ENCODE measurements at regions of chr6 and their contacts with region 1.

Region 1: DNA sequence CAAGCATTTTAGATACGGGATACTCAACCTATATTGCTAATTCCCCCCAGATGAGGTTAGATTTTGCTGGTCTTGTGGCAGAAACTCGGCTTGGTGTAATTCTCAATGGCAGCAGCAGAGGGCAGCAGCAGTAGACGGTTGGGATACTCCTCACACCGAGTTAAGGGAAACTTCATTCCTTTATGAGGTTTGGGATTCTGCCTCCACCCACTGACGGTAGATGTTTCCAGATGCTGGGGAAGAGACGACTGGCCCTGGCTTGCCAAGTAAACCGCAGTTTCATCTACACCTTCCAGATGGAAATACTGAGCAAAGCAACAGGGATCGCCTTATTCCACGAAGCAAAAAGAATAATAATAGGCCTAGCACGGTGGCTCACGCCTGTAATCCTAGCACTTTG is 8.2 kb upstream of the TBC1D7 start:
- DNase-seq: peak; percentile 82
- H3K4me3 Mint-ChIP-seq: no peak overlapping the region
- H3K27ac Mint-ChIP-seq: no peak overlapping the region
- H3K4me1 Mint-ChIP-seq: peaks cover 8% of the 10 kb centered on the region
- H3K27me3 Mint-ChIP-seq: no peaks in the 10 kb centered on the region

Region 2: GRCh38 chr6:12666886-12667285 is 669.7 kb before region 1 on chr6:
- CTCF ChIA-PET with region 1: no interaction called
- intact Hi-C with region 1: no loop called
- DNase-seq: no peak
- H3K4me3 Mint-ChIP-seq: no peak overlapping the region
- H3K27ac Mint-ChIP-seq: no peak overlapping the region
- H3K4me1 Mint-ChIP-seq: no peaks in the 10 kb centered on the region
- H3K27me3 Mint-ChIP-seq: no peaks in the 10 kb centered on the region

Region 3: DNA sequence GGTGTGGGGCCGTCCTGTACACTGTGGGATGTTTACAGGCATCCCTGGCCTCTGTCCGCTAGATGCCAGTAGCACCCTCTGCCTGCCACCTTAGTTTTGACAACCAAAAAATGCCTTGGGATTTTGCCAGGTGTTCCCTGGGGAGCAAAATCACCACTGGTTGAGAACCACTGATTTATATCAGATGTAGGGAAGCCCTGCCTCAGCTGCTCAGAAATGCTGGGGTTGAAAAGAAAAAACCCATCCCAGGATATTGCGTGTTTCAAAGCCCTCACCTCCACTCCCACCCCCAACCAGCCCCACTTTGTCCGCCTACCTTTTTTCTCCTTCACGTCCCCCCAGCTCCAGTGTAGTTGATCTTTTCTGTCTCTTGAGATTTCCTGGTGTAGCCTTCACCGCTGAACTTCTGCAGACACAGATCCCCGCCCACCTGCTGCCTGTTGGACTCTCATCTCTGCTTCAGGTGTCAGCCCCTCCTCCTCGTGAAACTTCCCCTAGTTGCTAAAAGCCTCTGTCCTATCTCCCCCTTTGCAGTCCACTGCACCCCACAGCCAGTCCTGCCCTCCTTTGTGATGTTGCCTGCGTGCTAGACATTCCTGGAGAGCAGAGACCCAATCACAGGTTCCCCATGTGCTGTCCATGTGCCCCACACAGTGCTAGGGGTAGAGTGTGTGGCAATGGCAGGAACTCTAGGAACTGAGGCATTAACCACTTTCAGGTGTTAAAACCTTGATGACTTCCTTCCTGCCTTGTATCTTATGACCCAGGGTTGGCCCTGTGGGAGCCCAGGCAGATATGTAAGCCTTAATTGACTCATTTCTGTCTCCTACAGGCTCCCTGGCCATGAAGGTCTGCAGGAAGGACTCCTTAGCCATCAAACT is 107.1 kb before region 1 on chr6:
- CTCF ChIA-PET with region 1: no interaction called
- intact Hi-C with region 1: no loop called
- DNase-seq: peak; percentile 31
- H3K4me3 Mint-ChIP-seq: no peak overlapping the region
- H3K27ac Mint-ChIP-seq: no peak overlapping the region
- H3K4me1 Mint-ChIP-seq: peaks cover 10% of the 10 kb centered on the region
- H3K27me3 Mint-ChIP-seq: peaks cover 2% of the 10 kb centered on the region

Region 4: DNA sequence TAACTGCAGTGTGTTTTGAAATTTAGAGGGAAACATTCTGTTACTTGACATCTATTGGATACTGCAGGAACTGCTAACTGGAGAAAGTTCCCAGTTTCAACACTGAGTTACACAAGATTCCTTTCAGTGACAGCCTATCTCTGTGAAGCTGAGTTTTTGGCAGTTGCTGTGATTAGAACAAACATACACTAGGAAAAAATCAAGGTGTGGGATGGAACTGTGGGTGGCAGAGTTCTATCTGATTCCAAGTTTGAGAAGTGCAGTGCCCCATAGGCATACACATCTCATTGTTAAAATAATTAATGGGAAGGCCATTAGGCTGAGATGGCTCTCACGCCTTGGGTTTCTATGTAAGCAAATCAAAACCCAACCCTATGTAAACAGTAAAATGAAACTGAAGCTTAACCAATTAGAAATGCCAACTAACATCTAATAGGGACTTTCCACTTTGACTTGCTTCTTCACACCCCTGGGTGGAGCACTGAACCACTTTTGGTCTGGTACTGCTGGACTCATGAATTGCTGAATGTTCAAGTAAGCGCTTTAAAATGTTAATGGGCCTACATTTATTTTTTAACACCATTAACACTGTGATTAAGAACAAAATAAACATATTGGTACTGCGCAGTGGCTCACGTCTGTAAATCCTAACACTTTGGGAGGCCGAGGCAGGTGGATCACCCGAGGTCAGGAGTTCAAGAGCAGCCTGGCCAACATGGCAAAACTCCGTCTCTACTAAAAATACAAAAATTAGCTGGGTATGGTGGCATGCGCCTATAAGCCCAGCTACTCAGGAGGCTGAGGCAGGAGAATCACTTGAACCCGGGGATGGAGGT is 47.0 kb after region 1 on chr6:
- CTCF ChIA-PET with region 1: no interaction called
- intact Hi-C with region 1: loop called (anchors 1 kb)
- DNase-seq: peak; percentile 46
- H3K4me3 Mint-ChIP-seq: no peak overlapping the region
- H3K27ac Mint-ChIP-seq: no peak overlapping the region
- H3K4me1 Mint-ChIP-seq: peaks cover 13% of the 10 kb centered on the region
- H3K27me3 Mint-ChIP-seq: no peaks in the 10 kb centered on the region

Region 5: DNA sequence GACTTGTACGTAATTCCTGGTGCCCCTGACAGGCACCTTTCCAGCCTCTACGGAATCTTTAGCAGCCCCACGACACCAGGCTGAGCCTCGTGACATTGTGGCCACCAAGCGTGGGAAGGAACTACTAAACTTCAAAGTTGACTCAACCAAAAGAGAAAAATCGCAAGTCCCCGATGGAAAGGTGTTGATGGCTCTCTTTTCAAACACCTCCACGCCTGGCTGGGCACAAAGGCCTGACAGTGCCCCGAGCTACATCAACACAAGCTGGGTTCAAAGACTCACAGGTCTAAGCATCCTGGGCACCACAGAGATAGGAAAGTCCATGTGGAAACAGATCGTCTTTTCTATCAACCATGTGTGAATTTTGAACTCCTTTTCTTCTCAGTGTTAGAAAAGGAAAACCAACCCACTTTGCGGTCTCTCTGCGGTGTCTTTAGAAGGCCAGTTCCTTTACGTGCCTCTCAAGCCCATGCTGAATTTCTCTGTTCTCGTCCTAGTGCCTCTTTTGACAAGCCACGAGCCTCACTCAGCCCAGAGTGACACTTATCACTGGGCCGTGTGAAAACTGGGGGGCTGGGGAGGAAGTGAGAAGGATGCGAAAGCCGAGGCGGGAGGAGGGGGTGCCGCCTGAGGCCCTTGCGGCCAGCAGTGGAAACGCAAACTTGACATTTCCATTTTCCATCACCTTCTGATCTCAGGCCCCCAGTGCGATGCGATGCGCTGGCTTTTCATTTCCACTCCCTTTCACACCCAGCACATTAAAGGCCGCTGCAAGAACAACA is 91.4 kb after region 1 on chr6:
- CTCF ChIA-PET with region 1: interaction called, 6 read pairs
- intact Hi-C with region 1: loop called (anchors 1 kb)
- DNase-seq: peak; percentile 90
- H3K4me3 Mint-ChIP-seq: peak overlapping the region; percentile 53
- H3K27ac Mint-ChIP-seq: peak overlapping the region; percentile 85
- H3K4me1 Mint-ChIP-seq: peaks cover 68% of the 10 kb centered on the region
- H3K27me3 Mint-ChIP-seq: no peaks in the 10 kb centered on the region

Region 6: DNA sequence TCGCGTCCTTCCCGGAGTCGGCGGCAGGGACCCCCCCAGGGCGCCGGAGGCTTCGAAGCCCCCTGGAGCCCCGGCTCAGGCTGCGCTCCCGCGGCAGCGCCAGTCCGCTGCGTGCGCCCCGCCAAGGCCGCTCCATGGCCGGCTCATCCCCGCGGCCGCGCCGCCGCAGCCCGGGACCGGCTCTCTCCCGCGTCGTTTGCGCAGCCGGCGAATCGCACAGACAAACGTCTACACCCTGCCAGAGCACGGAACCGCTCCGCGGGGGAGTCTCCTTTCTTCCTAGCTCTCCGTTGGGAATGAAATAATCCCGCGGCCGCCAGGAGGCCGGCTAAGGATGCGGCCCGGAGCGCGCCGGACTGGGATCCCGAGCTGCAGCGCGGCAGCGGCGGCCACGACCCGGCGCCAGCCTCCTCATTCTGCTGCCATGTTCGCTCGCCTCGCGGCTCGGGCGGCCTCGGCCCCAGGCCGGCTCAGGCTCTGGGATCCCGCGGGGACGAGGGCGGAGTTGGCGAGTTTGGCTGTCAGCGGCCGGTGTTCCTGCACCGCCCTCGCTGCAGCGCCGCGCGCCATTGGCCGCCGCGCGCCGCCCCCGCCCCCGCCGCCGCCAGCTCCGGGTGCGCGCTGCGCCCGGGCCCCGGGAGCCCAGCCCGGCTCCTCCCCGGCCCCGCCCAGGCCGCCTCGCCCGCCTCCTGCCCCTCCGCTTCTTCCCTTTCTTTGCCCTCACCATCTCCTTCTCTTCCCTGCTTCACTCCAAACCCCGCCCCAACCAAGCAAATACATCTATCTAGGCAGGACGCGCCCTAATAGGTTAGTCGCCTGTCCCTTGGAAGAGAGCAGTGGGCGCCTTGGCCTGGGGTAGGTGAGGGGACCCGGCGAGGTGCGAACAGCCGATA is 150.8 kb after region 1 on chr6 and contains the start of gene GFOD1:
- CTCF ChIA-PET with region 1: interaction called, 5 read pairs
- intact Hi-C with region 1: loop called (anchors 2 kb)
- DNase-seq: peak; percentile 80
- H3K4me3 Mint-ChIP-seq: peak within 1 kb of the TSS; percentile 92
- H3K27ac Mint-ChIP-seq: peak within 1 kb of the TSS; percentile 47
- H3K4me1 Mint-ChIP-seq: peaks cover 24% of the 10 kb centered on the region
- H3K27me3 Mint-ChIP-seq: peaks cover 2% of the 10 kb centered on the region
- total RNA-seq, gene GFOD1: 3.7 to 4.2 TPM

Region 7: DNA sequence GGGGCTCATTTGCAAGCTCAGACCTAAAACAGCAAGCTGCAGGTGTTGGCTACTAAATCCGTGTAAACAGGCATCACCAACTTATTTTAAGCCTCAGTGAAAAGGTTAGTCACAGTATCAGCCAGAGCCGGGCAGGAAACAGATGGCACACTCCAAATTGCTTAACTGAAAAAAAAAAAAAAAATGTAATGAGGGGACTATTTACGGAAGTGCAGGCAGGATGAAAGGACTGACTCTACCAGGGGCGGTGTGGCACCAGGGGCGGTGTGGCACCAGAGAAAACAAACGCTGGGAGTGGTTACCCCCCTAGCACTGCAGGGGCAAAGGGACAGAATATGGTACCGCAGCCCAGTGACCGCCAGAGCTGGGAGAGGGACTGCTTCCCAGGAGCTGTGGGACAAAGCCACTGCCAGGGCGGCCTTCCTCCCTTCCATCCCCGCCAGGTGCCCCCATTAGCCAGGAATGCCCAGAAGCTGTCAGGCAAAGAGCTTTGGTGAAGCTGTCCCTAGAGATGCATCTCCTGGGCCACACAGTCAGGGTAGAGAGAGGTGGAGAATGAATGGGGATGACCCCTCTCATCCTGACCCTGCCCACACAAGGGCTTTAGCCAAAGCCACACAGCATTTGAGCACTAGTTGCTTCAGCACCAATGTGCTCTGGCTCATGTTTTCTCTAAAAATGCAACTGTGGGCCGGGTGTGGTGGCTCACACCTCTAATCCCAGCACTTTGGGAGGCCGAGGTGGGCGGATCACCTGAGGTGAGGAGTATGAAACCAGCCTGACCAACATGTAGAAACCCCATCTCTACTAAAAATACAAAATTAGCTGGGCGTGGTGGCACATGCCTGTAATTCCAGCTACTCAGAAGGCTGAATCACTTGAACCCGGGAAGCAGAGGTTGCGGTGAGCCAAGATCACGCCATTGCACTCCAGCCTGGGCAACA is 190.4 kb after region 1 on chr6:
- CTCF ChIA-PET with region 1: interaction called, 4 read pairs
- intact Hi-C with region 1: loop called (anchors 1 kb)
- DNase-seq: peak; percentile 60
- H3K4me3 Mint-ChIP-seq: no peak overlapping the region
- H3K27ac Mint-ChIP-seq: no peak overlapping the region
- H3K4me1 Mint-ChIP-seq: peaks cover 11% of the 10 kb centered on the region
- H3K27me3 Mint-ChIP-seq: no peaks in the 10 kb centered on the region

Region 8: GRCh38 chr6:13538084-13538483 is 201.5 kb after region 1 on chr6:
- CTCF ChIA-PET with region 1: interaction called, 6 read pairs
- intact Hi-C with region 1: loop called (anchors 1 kb)
- DNase-seq: no peak
- H3K4me3 Mint-ChIP-seq: no peak overlapping the region
- H3K27ac Mint-ChIP-seq: no peak overlapping the region
- H3K4me1 Mint-ChIP-seq: no peaks in the 10 kb centered on the region
- H3K27me3 Mint-ChIP-seq: no peaks in the 10 kb centered on the region

Region 9: DNA sequence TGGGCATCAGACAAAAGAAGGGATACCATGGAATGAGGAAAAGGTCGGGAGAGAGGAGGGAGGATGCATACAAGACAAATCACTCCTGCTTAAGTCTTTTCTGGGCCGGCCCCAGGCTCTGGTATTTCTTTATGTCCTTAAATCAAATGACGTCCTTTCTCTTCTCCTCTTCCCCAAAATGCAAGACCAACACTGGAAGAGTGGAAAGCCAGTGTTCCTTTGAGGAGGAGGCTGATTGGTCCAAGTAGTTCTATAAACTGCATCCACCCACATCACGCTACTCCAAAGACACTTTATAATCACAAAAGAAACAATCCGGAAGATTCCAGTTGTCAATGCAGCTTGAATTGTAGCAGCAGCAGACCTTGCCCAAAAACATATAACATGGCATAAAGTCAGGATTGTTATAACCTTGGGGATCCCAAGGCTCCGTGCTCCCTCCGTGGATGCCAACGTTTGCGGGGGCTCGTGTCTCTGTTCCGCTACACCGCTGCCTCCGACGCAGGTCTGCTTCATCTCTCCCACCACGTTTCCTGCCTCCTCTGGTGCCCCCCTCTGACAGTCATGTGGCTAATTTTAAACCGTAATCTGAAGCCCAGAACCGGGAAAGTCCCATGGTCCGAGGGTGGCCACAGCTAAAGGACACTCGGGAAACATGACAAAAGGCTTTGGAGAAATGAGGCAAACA is 430.7 kb after region 1 on chr6:
- CTCF ChIA-PET with region 1: no interaction called
- intact Hi-C with region 1: loop called (anchors 1 kb)
- DNase-seq: peak; percentile 71
- H3K4me3 Mint-ChIP-seq: peak overlapping the region; percentile 78
- H3K27ac Mint-ChIP-seq: no peak overlapping the region
- H3K4me1 Mint-ChIP-seq: peaks cover 43% of the 10 kb centered on the region
- H3K27me3 Mint-ChIP-seq: peaks cover 1% of the 10 kb centered on the region

Measured in activated naive CD4-positive, alpha-beta T cell treated with anti-CD3 and anti-CD28 coated beads for 36 hours (primary cell).